Colonic mucosa (tissue), 4 donors: ENCODE measurements at regions of chr11 and their contacts with region 1.

Region 1: DNA sequence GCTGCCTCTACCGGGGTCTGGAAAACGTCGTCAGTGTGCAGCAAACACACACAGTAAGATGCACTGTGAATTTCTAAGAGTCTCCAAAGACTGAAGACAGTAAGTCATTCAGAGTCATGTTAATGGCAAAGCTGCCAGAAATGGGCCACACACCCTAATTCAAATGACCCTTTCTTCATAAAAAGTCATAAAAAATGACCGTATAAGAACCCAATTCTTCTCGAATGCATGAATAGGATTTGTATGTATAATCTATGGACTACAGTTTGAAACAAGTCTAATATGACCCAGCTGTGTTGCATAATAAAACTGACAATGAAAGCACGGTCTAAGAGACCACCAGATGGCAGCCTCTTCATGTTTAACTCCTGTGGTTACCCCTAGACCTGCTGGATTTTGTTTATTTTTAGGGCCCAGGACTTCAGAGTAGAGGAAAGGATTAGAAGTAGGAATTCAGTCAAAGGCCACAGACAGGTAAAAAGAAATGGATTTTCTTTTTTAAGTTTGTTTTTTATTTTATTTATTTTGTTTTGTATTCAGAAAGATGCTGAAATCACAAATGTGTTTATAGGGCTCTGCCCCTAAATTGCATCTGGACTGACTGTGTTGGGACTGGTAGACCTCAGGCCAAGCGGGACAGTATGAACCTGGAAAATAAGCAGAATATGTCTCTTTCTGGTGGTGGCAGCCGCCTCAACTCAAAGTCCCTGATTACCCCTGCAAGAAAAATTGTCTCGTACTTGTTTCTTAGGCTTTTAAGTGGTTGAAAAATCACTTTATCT is 32.1 kb upstream of the SLC5A12 start:
- DNase-seq: peak; percentile 39
- H3K4me3 ChIP-seq: no peak overlapping the region
- H3K27ac ChIP-seq: no peak overlapping the region
- H3K4me1 ChIP-seq: no peaks in the 10 kb centered on the region
- H3K27me3 ChIP-seq: no peaks in the 10 kb centered on the region
- CTCF ChIP-seq: peak; percentile 53

Region 2: GRCh38 chr11:26297189-26297975 is 456.5 kb before region 1 on chr11:
- intact Hi-C with region 1: loop called (anchors 10 kb)
- DNase-seq: no peak
- H3K4me3 ChIP-seq: no peak overlapping the region
- H3K27ac ChIP-seq: no peak overlapping the region
- H3K4me1 ChIP-seq: no peaks in the 10 kb centered on the region
- H3K27me3 ChIP-seq: no peaks in the 10 kb centered on the region
- CTCF ChIP-seq: peak; percentile 53

Region 3: GRCh38 chr11:26649884-26650283 is 104.0 kb before region 1 on chr11:
- intact Hi-C with region 1: loop called (anchors 10 kb)
- DNase-seq: peak; percentile 75
- H3K4me3 ChIP-seq: no peak overlapping the region
- H3K27ac ChIP-seq: no peak overlapping the region
- H3K4me1 ChIP-seq: no peaks in the 10 kb centered on the region
- H3K27me3 ChIP-seq: no peaks in the 10 kb centered on the region
- CTCF ChIP-seq: peak; percentile 46

Region 4: GRCh38 chr11:26792941-26793340 is 39.0 kb after region 1 on chr11:
- intact Hi-C with region 1: no loop called
- DNase-seq: no peak
- H3K4me3 ChIP-seq: no peak overlapping the region
- H3K27ac ChIP-seq: no peak overlapping the region
- H3K4me1 ChIP-seq: no peaks in the 10 kb centered on the region
- H3K27me3 ChIP-seq: no peaks in the 10 kb centered on the region
- CTCF ChIP-seq: no peak

Region 5: DNA sequence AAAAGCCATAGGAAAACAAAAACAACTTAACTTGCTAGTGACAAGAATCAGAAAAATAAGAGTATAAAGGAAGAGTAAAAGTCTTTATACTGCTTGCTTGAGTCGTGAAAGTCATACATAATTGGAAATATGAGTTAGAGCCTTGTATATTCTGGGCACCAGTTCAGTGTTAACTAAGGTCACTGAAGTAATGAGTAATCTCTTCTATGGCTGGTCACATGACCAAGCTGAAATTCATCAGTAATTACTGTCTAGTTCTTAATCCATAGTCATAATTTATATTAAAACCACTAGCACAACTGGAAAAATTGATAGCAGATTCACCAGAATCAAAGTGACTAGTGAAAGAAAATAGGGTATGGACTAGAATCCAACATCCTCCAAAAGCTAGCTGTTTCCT is 52.3 kb after region 1 on chr11:
- intact Hi-C with region 1: no loop called
- DNase-seq: no peak
- H3K4me3 ChIP-seq: no peak overlapping the region
- H3K27ac ChIP-seq: no peak overlapping the region
- H3K4me1 ChIP-seq: no peaks in the 10 kb centered on the region
- H3K27me3 ChIP-seq: no peaks in the 10 kb centered on the region
- CTCF ChIP-seq: no peak

Region 6: DNA sequence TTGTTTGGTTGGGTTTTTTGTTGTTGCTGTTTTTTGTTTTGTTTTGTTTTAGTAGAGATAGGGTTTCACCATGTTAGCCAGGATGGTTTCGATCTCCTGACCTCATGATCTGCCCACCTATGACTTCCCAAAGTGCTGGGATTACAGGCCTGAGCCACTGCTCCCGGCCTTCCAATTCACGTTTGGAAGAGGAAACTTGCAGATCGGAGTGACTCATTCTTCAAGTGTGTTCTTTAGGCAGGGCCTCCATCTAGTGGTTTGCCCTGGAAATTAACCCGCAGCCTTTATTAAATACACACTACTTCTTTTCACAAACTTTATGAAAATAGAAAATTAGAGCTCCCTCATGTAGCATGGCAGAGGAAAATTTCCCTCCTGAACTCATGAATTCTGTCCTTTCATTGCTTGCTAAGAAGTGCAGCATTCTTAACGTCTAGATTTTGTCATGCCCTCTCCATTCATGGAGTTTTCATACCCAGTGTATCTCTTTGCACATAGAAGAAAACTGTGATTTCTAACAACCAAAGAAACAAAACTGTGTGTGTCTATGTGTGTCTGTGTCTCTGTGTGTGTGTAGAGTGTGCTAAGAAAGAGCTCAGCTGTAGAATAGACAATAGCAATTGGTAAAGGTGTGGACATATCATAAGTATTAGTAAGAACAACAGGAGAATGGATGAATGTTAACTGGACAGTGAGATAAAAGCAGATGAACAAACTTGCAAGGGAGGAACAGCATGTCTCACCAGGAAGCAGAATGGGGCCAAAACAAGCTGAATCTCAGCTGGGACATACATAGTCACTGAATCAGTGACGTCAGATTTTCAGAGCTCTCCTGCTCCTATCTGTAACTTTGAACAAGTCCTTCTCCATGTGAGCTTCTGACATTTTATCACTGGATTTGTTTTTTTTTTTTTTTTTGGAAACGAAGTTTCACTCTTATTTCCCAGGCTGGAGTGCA is 405.1 kb after region 1 on chr11:
- intact Hi-C with region 1: loop called (anchors 5 kb)
- DNase-seq: peak; percentile 61
- H3K4me3 ChIP-seq: no peak overlapping the region
- H3K27ac ChIP-seq: no peak overlapping the region
- H3K4me1 ChIP-seq: no peaks in the 10 kb centered on the region
- H3K27me3 ChIP-seq: no peaks in the 10 kb centered on the region
- CTCF ChIP-seq: peak; percentile 75

Region 7: DNA sequence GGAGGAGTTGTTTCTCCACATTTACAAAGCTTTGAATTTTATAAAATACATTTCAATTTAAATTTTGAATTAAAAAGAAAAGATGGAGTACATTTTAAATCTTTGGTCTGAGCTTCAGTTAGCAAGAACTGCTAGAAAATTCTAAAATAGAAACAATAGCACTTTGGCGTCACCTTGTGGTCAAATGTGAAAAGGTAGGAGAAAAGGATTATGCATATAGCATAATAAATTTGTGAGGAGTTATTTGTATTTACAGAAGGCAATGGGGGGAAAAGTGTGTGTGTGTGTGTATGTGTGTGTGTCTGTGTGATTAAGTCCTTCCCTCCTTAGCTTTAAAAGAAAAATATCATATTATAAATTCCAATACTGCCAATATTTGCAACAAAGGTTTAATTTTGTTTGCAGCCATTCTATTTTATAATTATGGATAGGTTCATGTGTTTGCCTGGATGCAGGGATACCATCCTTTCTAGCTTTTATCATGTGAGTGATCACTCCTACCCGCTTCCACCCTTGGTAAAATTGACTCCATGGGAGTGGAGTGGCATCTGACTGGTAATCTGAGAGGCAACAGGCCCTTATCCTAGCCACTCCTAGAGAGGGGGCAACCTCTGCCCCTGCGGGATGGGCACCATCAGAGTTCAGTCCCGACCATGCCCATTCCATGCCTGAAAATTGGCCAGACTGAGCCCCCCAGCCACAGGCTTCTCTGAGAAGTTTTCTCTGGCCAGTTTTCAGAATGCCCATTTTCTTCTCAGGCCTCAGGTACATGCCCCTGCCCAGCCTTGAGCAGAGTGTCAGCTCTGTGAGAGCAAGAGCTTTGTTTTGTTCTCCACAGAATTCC is 732.2 kb after region 1 on chr11:
- intact Hi-C with region 1: loop called (anchors 10 kb)
- DNase-seq: peak; percentile 74
- H3K4me3 ChIP-seq: no peak overlapping the region
- H3K27ac ChIP-seq: no peak overlapping the region
- H3K4me1 ChIP-seq: no peaks in the 10 kb centered on the region
- H3K27me3 ChIP-seq: no peaks in the 10 kb centered on the region
- CTCF ChIP-seq: peak; percentile 92